MCF 10A (cell line): ENCODE measurements at regions of chr10 and their contacts with region 1.

Region 1: GRCh38 chr10:88386821-88387773 is 196.0 kb downstream of the RNLS start:
- DNase-seq: peak; percentile 30
- H3K4me3 Mint-ChIP-seq: no peak overlapping the region
- H3K27ac Mint-ChIP-seq: no peak overlapping the region
- H3K4me1 Mint-ChIP-seq: peaks cover 7% of the 10 kb centered on the region
- H3K27me3 Mint-ChIP-seq: no peaks in the 10 kb centered on the region
- CTCF ChIP-seq: no peak

Region 2: GRCh38 chr10:87817609-87818504 is 569.2 kb before region 1 on chr10 and contains the start of gene ATAD1:
- CTCF ChIA-PET with region 1: interaction called, 6 read pairs
- POLR2A ChIA-PET with region 1: interaction called, 32 read pairs
- intact Hi-C with region 1: no loop called
- DNase-seq: peak; percentile 89
- H3K4me3 Mint-ChIP-seq: peak within 1 kb of the TSS; percentile 95
- H3K27ac Mint-ChIP-seq: peak within 1 kb of the TSS; percentile 79
- H3K4me1 Mint-ChIP-seq: peaks cover 17% of the 10 kb centered on the region
- H3K27me3 Mint-ChIP-seq: no peaks in the 10 kb centered on the region
- CTCF ChIP-seq: no peak
- total RNA-seq, gene ATAD1: 75.2 and 80.7 TPM in 2 replicates

Region 3: GRCh38 chr10:87868277-87868676 is 518.8 kb before region 1 on chr10:
- CTCF ChIA-PET with region 1: interaction called, 56 read pairs
- POLR2A ChIA-PET with region 1: interaction called, 192 read pairs
- intact Hi-C with region 1: no loop called
- DNase-seq: peak; percentile 30
- H3K4me3 Mint-ChIP-seq: peak overlapping the region; percentile 87
- H3K27ac Mint-ChIP-seq: no peak overlapping the region
- H3K4me1 Mint-ChIP-seq: peaks cover 17% of the 10 kb centered on the region
- H3K27me3 Mint-ChIP-seq: no peaks in the 10 kb centered on the region
- CTCF ChIP-seq: no peak

Region 4: DNA sequence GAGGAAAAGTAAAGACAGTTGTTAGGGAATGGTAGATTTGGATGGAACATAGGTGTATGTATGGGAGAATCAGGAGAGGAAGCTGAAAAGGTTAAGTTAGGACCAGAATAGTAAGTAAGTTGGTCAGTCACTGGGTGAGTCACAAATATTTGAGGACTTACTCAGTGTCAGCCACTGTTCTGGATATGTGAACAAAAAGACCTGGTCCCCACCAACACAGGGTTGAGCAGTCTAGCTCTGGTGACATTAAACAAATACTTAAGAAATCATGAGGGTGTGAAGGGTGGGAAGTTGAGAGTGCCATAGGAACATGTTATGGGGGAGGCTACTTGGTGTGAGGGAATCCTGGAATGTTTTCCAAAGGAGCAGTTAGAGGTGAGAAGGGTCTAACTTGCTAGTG is 276.7 kb before region 1 on chr10:
- CTCF ChIA-PET with region 1: no interaction called
- POLR2A ChIA-PET with region 1: no interaction called
- intact Hi-C with region 1: loop called (anchors 2 kb)
- DNase-seq: peak; percentile 62
- H3K4me3 Mint-ChIP-seq: no peak overlapping the region
- H3K27ac Mint-ChIP-seq: no peak overlapping the region
- H3K4me1 Mint-ChIP-seq: peaks cover 21% of the 10 kb centered on the region
- H3K27me3 Mint-ChIP-seq: no peaks in the 10 kb centered on the region
- CTCF ChIP-seq: no peak

Region 5: GRCh38 chr10:88209837-88210561 is 177.1 kb before region 1 on chr10:
- CTCF ChIA-PET with region 1: interaction called, 6 read pairs
- POLR2A ChIA-PET with region 1: interaction called, 8 read pairs
- intact Hi-C with region 1: loop called (anchors 5 kb)
- DNase-seq: peak; percentile 72
- H3K4me3 Mint-ChIP-seq: peak overlapping the region; percentile 12
- H3K27ac Mint-ChIP-seq: peak overlapping the region; percentile 43
- H3K4me1 Mint-ChIP-seq: peaks cover 29% of the 10 kb centered on the region
- H3K27me3 Mint-ChIP-seq: no peaks in the 10 kb centered on the region
- CTCF ChIP-seq: no peak